ENCODE measurements at regions of chrX and their contacts with region 1.

Region 1: GRCh38 chrX:148466292-148466691 is 34.1 kb upstream of the AFF2 start:
- DNase-seq: no peak
- H3K4me3 Mint-ChIP-seq: no peak overlapping the region
- H3K27ac Mint-ChIP-seq: no peak overlapping the region
- H3K4me1 Mint-ChIP-seq: no peaks in the 10 kb centered on the region
- H3K27me3 Mint-ChIP-seq: peaks cover 3% of the 10 kb centered on the region

Region 2: DNA sequence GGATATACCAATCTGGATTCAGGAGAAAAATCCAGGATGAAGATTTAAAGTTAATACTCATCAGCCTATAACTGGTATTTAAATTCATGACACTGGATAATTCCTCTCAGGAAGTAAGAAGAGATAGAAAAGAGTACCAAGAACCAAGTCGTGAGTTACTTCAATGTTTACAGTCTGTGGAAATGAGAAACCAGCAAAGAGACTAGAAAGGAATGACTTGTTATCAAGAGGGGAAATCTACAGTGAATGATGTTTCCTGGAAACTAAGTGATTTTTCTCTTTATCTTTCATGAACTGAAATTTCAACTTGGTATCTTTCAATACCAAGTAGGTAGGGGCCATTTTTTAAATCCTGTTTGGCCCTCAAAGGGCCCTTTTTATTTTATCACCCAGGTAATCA is 183.8 kb before region 1 on chrX:
- intact Hi-C with region 1: loop called (anchors 1 kb)
- DNase-seq: no peak
- H3K4me3 Mint-ChIP-seq: peak overlapping the region; percentile 34
- H3K27ac Mint-ChIP-seq: peak overlapping the region; percentile 60
- H3K4me1 Mint-ChIP-seq: peaks cover 18% of the 10 kb centered on the region
- H3K27me3 Mint-ChIP-seq: no peaks in the 10 kb centered on the region

Region 3: DNA sequence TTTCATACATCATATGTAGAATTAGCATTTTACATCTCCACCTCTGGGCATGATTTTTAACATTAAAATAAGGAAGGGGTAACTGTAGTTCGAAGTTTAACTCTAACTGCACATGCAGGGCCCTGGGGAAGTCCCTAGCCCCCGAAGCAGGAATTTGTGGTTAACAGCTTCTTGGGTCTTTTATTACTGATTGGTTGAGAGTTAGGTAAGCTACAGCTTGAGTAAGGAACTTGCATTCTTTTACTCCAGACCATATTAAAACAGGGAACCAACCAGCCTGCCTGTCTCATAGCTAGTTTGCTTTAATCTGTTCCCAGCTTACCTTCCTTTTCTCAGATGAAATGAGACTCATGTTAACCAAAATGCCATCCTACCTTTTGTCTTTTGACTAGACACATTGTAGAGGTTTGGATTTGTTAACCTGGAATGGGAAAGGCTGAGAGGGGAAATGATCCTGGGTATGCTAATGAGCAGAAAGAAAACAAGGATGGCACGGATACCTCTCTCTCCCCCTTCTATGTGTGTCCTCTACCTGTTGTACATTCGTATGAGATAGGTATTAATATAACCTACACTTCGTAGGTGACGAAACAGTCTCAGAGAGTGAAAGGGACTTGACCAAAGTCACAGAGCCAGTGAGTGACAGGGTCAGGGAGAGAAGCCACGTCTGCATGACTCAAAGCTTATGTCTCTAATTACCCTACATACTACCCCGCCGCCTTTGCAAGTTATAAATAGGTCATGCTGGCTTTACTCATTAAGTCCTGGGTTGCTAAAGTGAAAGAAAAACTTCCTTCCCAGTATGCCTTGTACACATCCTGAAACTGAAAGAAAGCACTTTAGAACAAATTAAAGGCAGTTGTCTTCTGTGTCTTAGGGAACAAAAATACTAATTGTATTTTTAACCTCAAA is 85.4 kb before region 1 on chrX:
- intact Hi-C with region 1: loop called (anchors 1 kb)
- DNase-seq: peak; percentile 82
- H3K4me3 Mint-ChIP-seq: peak overlapping the region; percentile 78
- H3K27ac Mint-ChIP-seq: peak overlapping the region; percentile 92
- H3K4me1 Mint-ChIP-seq: peaks cover 21% of the 10 kb centered on the region
- H3K27me3 Mint-ChIP-seq: no peaks in the 10 kb centered on the region

Region 4: GRCh38 chrX:148417934-148418333 is 48.4 kb before region 1 on chrX:
- intact Hi-C with region 1: loop called (anchors 2 kb)
- DNase-seq: no peak
- H3K4me3 Mint-ChIP-seq: no peak overlapping the region
- H3K27ac Mint-ChIP-seq: no peak overlapping the region
- H3K4me1 Mint-ChIP-seq: no peaks in the 10 kb centered on the region
- H3K27me3 Mint-ChIP-seq: no peaks in the 10 kb centered on the region

Region 5: DNA sequence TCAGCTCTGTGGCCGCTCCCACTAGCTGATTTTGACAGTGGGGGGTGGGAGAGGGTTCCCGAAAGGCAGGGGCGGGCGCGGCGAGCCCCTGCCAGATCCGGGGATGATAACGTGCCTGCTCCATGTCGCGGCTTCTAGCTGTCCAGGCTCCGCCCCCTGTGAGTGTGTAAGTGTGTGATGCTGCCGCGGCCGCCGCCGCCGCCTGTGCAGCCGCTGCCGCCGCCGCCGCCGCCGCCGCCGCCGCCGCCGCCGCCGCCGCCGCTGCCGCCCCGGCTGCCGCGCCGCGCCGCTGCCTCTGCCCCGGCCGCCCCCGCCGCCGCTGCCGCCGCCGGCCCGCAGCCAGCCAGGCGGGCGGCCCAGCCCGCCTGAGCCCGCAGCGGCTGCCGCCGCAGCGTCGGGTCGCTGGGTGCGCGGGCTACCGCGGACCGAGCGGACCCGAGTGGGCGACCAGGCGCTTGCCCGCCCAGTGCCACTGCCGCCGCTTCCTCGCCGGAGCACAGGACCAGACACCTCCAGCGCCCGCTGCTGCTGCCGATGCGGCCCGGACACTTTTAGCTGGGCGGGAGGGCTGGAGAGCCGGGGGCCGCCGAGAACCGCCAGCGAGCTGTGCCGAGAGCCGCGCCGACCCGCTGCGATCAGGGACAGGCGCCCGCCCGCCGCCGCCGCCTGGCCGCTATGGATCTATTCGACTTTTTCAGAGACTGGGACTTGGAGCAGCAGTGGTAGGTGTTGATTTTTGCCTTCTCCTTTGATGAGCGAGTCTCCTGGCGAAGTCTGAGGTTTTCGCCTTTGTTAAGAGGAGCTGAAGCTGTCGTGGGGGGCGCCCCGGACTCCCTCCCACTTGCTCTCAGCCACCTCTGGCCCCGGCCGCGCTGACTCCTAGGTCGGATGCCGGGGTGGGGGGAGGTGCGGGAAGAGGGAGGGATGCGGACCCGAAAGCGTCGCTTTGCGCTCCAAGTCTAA is 34.4 kb after region 1 on chrX and contains the start of gene AFF2:
- intact Hi-C with region 1: loop called (anchors 2 kb)
- DNase-seq: peak; percentile 72
- H3K4me3 Mint-ChIP-seq: peak within 1 kb of the TSS; percentile 81
- H3K27ac Mint-ChIP-seq: no peak within 1 kb of the TSS
- H3K4me1 Mint-ChIP-seq: peaks cover 8% of the 10 kb centered on the region
- H3K27me3 Mint-ChIP-seq: peaks cover 13% of the 10 kb centered on the region
- total RNA-seq, gene AFF2: 0.70 and 1.1 TPM in 2 replicates